ENCODE measurements at regions of chr13 and their contacts with region 1.

Region 1: DNA sequence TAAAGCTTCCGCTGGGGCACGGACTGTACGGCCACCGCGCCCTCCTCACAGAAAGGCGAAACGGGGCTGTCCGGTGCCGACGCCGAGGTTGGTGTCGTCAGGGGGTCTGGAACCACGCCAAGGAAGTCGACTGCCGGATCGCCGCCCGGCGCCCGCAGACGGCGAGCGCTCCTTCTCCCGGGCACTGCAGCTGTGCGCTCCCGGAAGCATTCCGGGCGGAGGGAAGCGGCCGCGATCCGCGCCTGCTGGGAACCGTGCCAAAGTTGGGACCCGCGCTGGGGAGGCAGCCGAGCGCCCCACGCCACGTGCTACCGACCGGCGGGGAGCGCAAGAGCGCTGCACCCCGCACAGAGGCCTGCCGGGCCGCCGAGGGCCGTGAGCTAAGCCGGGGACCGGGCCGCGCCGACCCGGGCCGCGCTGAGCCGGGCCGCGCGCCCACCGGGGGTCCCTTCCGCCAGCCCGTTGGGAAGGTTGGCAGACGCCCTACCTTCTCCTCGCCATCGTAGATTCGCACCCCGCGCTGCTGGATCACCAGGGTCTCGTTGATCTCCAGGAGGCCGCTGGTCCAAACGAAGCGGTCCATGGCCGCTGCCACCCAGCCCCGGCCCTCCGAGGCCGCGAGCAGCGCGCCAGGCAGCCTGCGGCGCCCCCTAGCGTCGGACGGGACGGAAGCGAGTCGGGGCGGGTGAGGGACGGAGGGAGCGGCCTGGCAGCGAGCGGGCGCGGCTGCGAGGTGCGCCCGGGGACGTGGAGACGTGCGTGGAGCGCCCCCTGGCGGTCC is at the start of gene VPS36:
- DNase-seq: peak; percentile 97 to 98
- ATAC-seq: peak; percentile 89 to 94 (median 91)
- H3K4me3 ChIP-seq: peak within 1 kb of the TSS; percentile 91
- H3K27ac ChIP-seq: peak within 1 kb of the TSS; percentile 99
- H3K4me1 ChIP-seq: peaks cover 28% of the 10 kb centered on the region
- H3K27me3 ChIP-seq: no peaks in the 10 kb centered on the region
- CTCF ChIP-seq: peak; percentile 100
- total RNA-seq, gene VPS36: 28.5 to 35.2 (median 31.3) TPM

Region 2: GRCh38 chr13:52001120-52001731 is 449.0 kb before region 1 on chr13:
- intact Hi-C with region 1: loop called in 1 of 2 experiments (anchors 10 kb)
- DNase-seq: no peak
- ATAC-seq: peak in 2 of 4 donors; percentile 37 to 62
- H3K4me3 ChIP-seq: no peak overlapping the region
- H3K27ac ChIP-seq: no peak overlapping the region
- H3K4me1 ChIP-seq: peaks cover 16% of the 10 kb centered on the region
- H3K27me3 ChIP-seq: no peaks in the 10 kb centered on the region
- CTCF ChIP-seq: peak; percentile 65

Region 3: GRCh38 chr13:52194184-52194868 is 255.9 kb before region 1 on chr13:
- intact Hi-C with region 1: loop called (anchors 5 to 10 kb)
- DNase-seq: peak; percentile 80 to 90
- ATAC-seq: peak; percentile 96 to 97 (median 97)
- H3K4me3 ChIP-seq: peak overlapping the region; percentile 85
- H3K27ac ChIP-seq: peak overlapping the region; percentile 87
- H3K4me1 ChIP-seq: peaks cover 10% of the 10 kb centered on the region
- H3K27me3 ChIP-seq: no peaks in the 10 kb centered on the region
- CTCF ChIP-seq: no peak

Region 4: GRCh38 chr13:52345631-52346274 is 104.4 kb before region 1 on chr13:
- intact Hi-C with region 1: loop called in 1 of 2 experiments (anchors 2 kb)
- DNase-seq: no peak
- ATAC-seq: no peak
- H3K4me3 ChIP-seq: no peak overlapping the region
- H3K27ac ChIP-seq: no peak overlapping the region
- H3K4me1 ChIP-seq: no peaks in the 10 kb centered on the region
- H3K27me3 ChIP-seq: no peaks in the 10 kb centered on the region
- CTCF ChIP-seq: no peak

Region 5: GRCh38 chr13:52652196-52652979 is 202.2 kb after region 1 on chr13 and contains the start of gene SUGT1:
- intact Hi-C with region 1: loop called (anchors 5 to 10 kb)
- DNase-seq: peak; percentile 98 to 99
- ATAC-seq: peak; percentile 98 to 99 (median 98)
- H3K4me3 ChIP-seq: peak within 1 kb of the TSS; percentile 91
- H3K27ac ChIP-seq: peak within 1 kb of the TSS; percentile 88
- H3K4me1 ChIP-seq: peaks cover 23% of the 10 kb centered on the region
- H3K27me3 ChIP-seq: no peaks in the 10 kb centered on the region
- CTCF ChIP-seq: peak; percentile 66
- total RNA-seq, gene SUGT1: 39.4 to 49.4 (median 42.0) TPM

Region 6: GRCh38 chr13:53422415-53422814 is 972.2 kb after region 1 on chr13:
- intact Hi-C with region 1: no loop called
- DNase-seq: no peak
- ATAC-seq: no peak
- H3K4me3 ChIP-seq: no peak overlapping the region
- H3K27ac ChIP-seq: no peak overlapping the region
- H3K4me1 ChIP-seq: no peaks in the 10 kb centered on the region
- H3K27me3 ChIP-seq: no peaks in the 10 kb centered on the region
- CTCF ChIP-seq: no peak

Measured in psoas muscle (tissue), 8 donors.